Activated CD4-positive, alpha-beta memory T cell treated with anti-CD3 and anti-CD28 coated beads, Interleukin-2, amount 10 ng/mL, durations not matched to agents 7 days and 5 days (primary cell): ENCODE measurements at regions of chr7 and their contacts with region 1.

Region 1: DNA sequence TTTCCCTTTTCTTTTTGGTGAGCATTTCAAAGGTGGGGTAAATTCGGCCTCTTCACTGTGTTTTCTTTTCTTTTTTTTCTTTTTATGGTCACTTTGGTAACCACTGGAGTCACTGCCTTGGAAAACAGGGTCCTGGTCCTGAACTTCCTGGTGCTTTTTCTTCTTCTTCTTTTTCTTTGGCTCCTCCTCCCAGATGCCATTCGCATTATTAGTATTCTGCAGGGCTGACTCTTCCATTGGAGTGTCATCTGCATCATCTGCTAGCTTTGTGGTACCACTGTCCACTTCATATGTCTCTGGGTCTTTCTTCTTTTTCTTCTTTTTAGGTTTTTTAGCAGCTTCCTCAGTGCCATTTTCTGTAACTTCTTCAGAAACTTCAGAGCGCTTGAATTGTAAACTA is 10.5 kb downstream of the POLR1F start:
- DNase-seq: no peak
- H3K4me3 Mint-ChIP-seq: no peak overlapping the region
- H3K27ac Mint-ChIP-seq: no peak overlapping the region
- H3K4me1 Mint-ChIP-seq: no peaks in the 10 kb centered on the region
- H3K27me3 Mint-ChIP-seq: no peaks in the 10 kb centered on the region

Region 2: GRCh38 chr7:19648791-19649190 is 49.5 kb before region 1 on chr7:
- CTCF ChIA-PET with region 1: no interaction called
- POLR2A ChIA-PET with region 1: no interaction called
- DNase-seq: no peak
- H3K4me3 Mint-ChIP-seq: no peak overlapping the region
- H3K27ac Mint-ChIP-seq: no peak overlapping the region
- H3K4me1 Mint-ChIP-seq: no peaks in the 10 kb centered on the region
- H3K27me3 Mint-ChIP-seq: no peaks in the 10 kb centered on the region

Region 3: GRCh38 chr7:19708397-19709248 is 10.3 kb after region 1 on chr7 and contains the start of gene POLR1F:
- CTCF ChIA-PET with region 1: interaction called, 28 read pairs
- POLR2A ChIA-PET with region 1: interaction called, 3 read pairs
- DNase-seq: peak; percentile 93
- H3K4me3 Mint-ChIP-seq: peak within 1 kb of the TSS; percentile 94
- H3K27ac Mint-ChIP-seq: peak within 1 kb of the TSS; percentile 71
- H3K4me1 Mint-ChIP-seq: peaks cover 37% of the 10 kb centered on the region
- H3K27me3 Mint-ChIP-seq: peaks cover 5% of the 10 kb centered on the region
- total RNA-seq, gene POLR1F: 17.0 to 17.3 TPM